PC-9 (cell line): ENCODE measurements at regions of chr5 and their contacts with region 1.

Region 1: DNA sequence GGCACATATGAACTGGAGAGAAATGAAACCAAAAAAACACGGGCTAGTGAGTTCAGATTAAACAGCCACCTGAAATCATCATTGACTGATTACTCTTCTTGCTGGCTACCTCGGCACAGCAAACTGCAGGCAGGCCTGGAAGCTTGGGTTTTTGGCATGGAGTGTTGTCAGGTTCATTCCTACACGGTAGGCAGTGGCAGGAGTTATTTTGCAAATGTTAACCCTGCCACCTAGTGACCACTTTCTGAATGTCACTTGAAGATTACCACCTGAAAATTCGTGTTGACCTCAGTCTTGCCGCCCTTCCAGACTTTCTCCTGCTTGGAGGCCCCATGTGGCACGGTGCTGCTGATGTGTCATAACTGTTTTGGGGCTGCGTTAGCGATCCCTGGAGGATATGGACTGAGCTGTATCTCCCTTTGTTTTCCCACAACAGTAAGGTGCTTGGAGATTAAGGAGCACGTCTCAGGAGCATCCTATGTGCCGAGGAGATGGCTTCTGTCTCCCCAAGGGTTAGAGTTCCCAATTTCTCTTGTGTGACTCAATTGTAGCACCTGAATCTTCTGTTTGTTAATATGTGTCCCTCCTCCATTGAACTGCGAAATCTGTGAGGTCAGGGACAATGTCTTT is 12.7 kb upstream of the CD180 start:
- DNase-seq: peak; percentile 63 to 73
- H3K4me3 ChIP-seq: no peak overlapping the region
- H3K27ac ChIP-seq: no peak overlapping the region
- H3K4me1 ChIP-seq: peaks cover 51% of the 10 kb centered on the region
- H3K27me3 ChIP-seq: no peaks in the 10 kb centered on the region
- CTCF ChIP-seq: peak; percentile 80

Region 2: DNA sequence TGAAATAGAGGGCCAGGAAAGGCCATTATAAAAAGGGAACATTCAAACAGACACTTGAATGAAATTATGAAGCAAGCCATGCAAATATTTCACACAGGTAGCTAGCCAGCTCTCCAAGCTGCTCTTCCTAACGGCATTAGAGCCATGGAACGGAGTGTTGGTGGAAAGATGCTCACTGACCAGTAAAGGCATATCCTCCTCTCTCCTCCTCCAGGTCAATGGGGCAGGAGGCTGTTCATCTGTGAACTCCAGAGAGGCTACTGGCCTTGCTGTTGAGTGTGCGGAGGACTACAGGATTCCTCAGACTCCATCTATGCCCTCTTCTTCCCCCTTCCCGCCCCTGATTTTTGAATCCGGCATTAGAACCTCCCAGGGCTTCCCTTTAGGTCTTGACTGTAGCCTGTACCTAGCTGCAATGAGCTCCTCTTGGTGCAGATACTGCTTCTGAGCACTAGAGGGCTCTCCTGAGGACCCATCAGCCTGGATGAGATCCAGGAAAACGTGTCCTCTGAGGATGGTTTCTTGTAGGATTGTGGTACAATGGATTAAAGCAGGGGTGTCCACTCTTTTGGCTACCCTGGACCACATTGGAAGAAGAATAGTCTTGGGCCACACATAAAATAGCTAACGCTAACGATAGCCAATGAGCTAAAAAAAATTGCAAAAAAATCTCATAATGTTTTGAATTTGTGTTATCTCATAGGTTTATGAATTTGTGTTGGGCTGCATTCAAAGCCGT is 903.0 kb before region 1 on chr5:
- CTCF ChIA-PET with region 1: no interaction called
- POLR2A ChIA-PET with region 1: interaction called, 3 read pairs
- intact Hi-C with region 1: loop called (anchors 2 kb)
- DNase-seq: peak; percentile 40 to 44
- H3K4me3 ChIP-seq: no peak overlapping the region
- H3K27ac ChIP-seq: no peak overlapping the region
- H3K4me1 ChIP-seq: no peaks in the 10 kb centered on the region
- H3K27me3 ChIP-seq: peaks cover 11% of the 10 kb centered on the region
- CTCF ChIP-seq: peak; percentile 83

Region 3: GRCh38 chr5:66864331-66864840 is 344.9 kb before region 1 on chr5:
- CTCF ChIA-PET with region 1: no interaction called
- POLR2A ChIA-PET with region 1: no interaction called
- intact Hi-C with region 1: loop called (anchors 5 kb)
- DNase-seq: peak in 1 of 2 experiments; percentile 25
- H3K4me3 ChIP-seq: no peak overlapping the region
- H3K27ac ChIP-seq: no peak overlapping the region
- H3K4me1 ChIP-seq: peaks cover 19% of the 10 kb centered on the region
- H3K27me3 ChIP-seq: no peaks in the 10 kb centered on the region
- CTCF ChIP-seq: peak; percentile 80

Region 4: DNA sequence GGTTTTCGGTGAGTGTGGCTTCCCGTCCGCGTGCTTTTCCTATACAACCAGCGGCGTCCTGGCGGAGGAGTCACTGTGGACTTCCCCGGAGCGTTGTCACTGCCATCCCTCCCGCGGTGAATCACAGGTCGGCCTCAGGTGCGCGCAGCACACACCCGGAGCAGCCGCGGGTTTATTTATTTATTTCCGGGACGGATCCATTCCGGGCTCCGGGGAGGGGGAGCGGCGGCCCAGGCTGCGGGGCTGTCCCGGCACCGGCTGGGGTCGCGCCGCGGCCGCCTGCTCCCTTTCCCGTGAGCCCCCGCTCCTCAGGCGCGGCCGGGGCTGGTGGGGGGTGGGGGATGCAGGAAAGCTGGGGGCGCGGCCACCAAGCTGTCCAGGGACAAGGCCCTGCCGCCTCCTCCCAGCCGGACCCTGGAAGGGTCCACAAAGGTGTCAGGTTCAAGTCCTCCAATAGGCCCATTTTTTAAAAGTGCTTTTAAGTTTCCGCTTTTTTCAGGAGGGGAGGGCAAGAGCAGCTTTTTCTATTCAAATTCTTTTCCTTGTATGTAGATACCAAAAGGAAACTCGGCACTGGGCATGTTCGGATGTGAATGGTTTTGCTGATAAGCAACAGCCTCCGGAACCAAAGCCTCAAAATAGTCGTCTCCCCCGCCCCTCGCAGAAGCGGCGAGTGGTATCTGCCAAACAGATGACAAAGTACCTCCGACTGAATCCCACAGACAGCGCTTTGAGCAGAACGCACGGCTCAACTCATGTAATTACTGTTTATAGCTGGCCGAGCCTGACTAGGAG is 205.1 kb before region 1 on chr5:
- CTCF ChIA-PET with region 1: no interaction called
- POLR2A ChIA-PET with region 1: no interaction called
- intact Hi-C with region 1: loop called (anchors 1 kb)
- DNase-seq: peak; percentile 89 to 92
- H3K4me3 ChIP-seq: peak overlapping the region; percentile 85
- H3K27ac ChIP-seq: peak overlapping the region; percentile 93
- H3K4me1 ChIP-seq: peaks cover 66% of the 10 kb centered on the region
- H3K27me3 ChIP-seq: no peaks in the 10 kb centered on the region
- CTCF ChIP-seq: no peak

Region 5: GRCh38 chr5:68730359-68731300 is 1521.4 kb after region 1 on chr5:
- CTCF ChIA-PET with region 1: no interaction called
- POLR2A ChIA-PET with region 1: no interaction called
- intact Hi-C with region 1: no loop called
- DNase-seq: no peak
- H3K4me3 ChIP-seq: no peak overlapping the region
- H3K27ac ChIP-seq: no peak overlapping the region
- H3K4me1 ChIP-seq: no peaks in the 10 kb centered on the region; the same call in 1 of the 2 replicates
- H3K27me3 ChIP-seq: no peaks in the 10 kb centered on the region
- CTCF ChIP-seq: no peak